GM12878 (cell line): ENCODE measurements at regions of chr14 and their contacts with region 1.

Region 1: DNA sequence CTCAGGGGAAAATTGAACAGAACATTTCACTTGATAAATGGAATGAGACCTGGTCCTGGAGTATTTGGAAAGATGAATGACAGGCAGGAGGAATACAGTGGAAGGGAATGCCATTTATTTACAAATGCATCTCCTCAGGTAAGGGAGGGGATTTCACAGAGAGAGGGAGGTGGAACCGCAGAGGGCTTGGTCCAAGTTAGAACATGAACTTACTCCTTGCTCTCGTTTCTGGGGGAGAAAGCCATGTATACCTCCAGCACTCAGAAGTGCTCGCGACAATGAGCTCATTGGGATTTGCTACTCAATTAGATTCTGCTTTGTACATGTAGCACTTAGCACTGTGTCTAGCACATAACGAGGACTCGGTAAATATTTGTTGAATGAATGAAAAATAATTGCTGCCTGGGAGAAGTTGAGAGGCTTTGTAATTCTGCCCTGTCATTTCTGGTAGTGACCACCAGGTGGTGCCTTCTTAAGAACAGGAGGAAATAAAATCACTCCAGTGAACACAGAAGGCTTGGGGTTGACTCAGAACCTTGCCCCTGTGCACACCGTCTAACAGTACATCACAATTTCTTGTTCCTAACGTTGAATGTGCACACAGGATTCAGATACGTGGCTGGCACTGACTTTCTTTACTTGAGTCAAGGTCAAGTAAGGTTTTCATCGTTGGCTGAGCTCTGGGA is 91.6 kb downstream of the RGS6 start:
- DNase-seq: peak; percentile 43
- ATAC-seq: peak; percentile 90
- H3K4me3 ChIP-seq: no peak overlapping the region
- H3K27ac ChIP-seq: no peak overlapping the region
- H3K4me1 ChIP-seq: peaks cover 15% of the 10 kb centered on the region
- H3K27me3 ChIP-seq: no peaks in the 10 kb centered on the region
- CTCF ChIP-seq: peak; percentile 61 to 76 (median 64)
- EP300 ChIP-seq: no peak
- POLR2A ChIP-seq: no peak
- RAD21 ChIP-seq: peak; percentile 80

Region 2: GRCh38 chr14:71988939-71989338 is 34.9 kb before region 1 on chr14:
- CTCF ChIA-PET with region 1: interaction called, 4 read pairs
- POLR2A ChIA-PET with region 1: interaction called, 4 read pairs
- RAD21 ChIA-PET with region 1: interaction called, 7 read pairs
- SMC1A ChIA-PET with region 1: interaction called, 12 read pairs
- in situ Hi-C with region 1: no loop called
- intact Hi-C with region 1: no loop called
- DNase-seq: no peak
- ATAC-seq: no peak
- H3K4me3 ChIP-seq: no peak overlapping the region
- H3K27ac ChIP-seq: no peak overlapping the region
- H3K4me1 ChIP-seq: no peaks in the 10 kb centered on the region
- H3K27me3 ChIP-seq: no peaks in the 10 kb centered on the region
- CTCF ChIP-seq: no peak
- EP300 ChIP-seq: no peak
- POLR2A ChIP-seq: no peak
- RAD21 ChIP-seq: no peak

Region 3: DNA sequence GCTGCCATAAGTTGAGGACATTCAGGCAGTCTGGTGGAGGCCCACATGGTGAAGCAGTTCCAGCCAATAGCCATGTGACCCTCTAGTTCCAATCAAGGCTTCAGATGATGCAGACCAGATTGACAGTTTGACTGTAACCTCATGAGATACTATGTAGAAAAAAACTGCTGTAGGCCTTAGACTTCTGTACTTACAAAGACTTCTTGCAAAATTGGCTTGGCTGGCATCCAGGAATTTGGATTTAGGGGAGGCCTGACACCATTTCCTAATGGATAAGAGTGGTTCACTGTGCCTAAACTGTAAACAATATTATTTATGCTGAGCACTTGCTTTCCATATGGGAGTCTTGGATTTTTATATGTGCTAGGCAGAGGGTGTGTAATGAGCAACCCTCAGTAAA is 15.2 kb before region 1 on chr14:
- CTCF ChIA-PET with region 1: interaction called, 9 read pairs
- POLR2A ChIA-PET with region 1: interaction called, 7 read pairs
- RAD21 ChIA-PET with region 1: interaction called, 9 read pairs
- SMC1A ChIA-PET with region 1: interaction called, 25 read pairs
- in situ Hi-C with region 1: no loop called
- intact Hi-C with region 1: no loop called
- DNase-seq: no peak
- ATAC-seq: no peak
- H3K4me3 ChIP-seq: no peak overlapping the region
- H3K27ac ChIP-seq: no peak overlapping the region
- H3K4me1 ChIP-seq: no peaks in the 10 kb centered on the region
- H3K27me3 ChIP-seq: no peaks in the 10 kb centered on the region
- CTCF ChIP-seq: no peak
- EP300 ChIP-seq: no peak
- POLR2A ChIP-seq: no peak
- RAD21 ChIP-seq: no peak

Region 4: GRCh38 chr14:72049455-72049854 is 25.6 kb after region 1 on chr14:
- CTCF ChIA-PET with region 1: interaction called, 15 read pairs
- POLR2A ChIA-PET with region 1: interaction called, 3 read pairs
- RAD21 ChIA-PET with region 1: interaction called, 12 read pairs
- SMC1A ChIA-PET with region 1: interaction called, 18 read pairs
- in situ Hi-C with region 1: no loop called
- intact Hi-C with region 1: loop called (anchors 2 kb)
- DNase-seq: peak; percentile 64
- ATAC-seq: peak; percentile 99
- H3K4me3 ChIP-seq: no peak overlapping the region
- H3K27ac ChIP-seq: no peak overlapping the region
- H3K4me1 ChIP-seq: no peaks in the 10 kb centered on the region
- H3K27me3 ChIP-seq: no peaks in the 10 kb centered on the region
- CTCF ChIP-seq: no peak
- EP300 ChIP-seq: peak; percentile 33 to 47; a peak in 1 of 4 replicates
- POLR2A ChIP-seq: no peak
- RAD21 ChIP-seq: no peak; the same call in 1 of the 2 replicates

Region 5: GRCh38 chr14:72060917-72061316 is 37.1 kb after region 1 on chr14:
- CTCF ChIA-PET with region 1: interaction called, 41 read pairs
- POLR2A ChIA-PET with region 1: interaction called, 3 read pairs
- RAD21 ChIA-PET with region 1: interaction called, 4 read pairs
- SMC1A ChIA-PET with region 1: interaction called, 22 read pairs
- in situ Hi-C with region 1: no loop called
- intact Hi-C with region 1: no loop called
- DNase-seq: no peak
- ATAC-seq: no peak
- H3K4me3 ChIP-seq: no peak overlapping the region
- H3K27ac ChIP-seq: no peak overlapping the region
- H3K4me1 ChIP-seq: no peaks in the 10 kb centered on the region
- H3K27me3 ChIP-seq: no peaks in the 10 kb centered on the region
- CTCF ChIP-seq: no peak
- EP300 ChIP-seq: no peak
- POLR2A ChIP-seq: no peak
- RAD21 ChIP-seq: no peak

Region 6: DNA sequence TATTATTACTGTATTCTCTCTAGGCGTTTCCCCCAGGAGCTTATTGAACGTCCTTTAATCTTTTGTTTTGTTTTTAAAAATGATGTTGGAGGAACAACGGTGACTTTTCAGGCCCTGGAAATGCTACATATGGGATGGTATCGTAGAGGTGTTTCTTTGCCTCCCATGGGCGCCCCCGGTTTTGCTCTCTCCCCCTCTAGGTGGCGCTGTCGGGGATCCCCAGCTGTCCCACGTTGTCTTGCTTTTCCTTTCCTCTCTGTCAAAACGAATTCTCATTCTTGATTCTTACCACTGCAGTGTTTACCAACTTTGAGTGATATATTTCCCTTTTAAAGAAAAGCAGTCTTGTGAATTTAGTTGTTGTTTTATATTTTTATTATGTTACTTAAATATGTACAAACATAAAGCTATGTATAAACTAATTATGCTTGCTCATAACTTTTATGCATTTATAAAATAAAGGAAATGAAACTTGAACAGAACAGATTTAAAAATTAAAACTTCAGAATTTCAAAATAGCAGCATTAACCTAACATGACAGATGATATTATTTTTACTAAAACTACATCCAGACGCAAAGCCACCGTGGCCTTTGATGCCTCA is 80.2 kb after region 1 on chr14:
- CTCF ChIA-PET with region 1: interaction called, 46 read pairs
- POLR2A ChIA-PET with region 1: interaction called, 3 read pairs
- RAD21 ChIA-PET with region 1: interaction called, 6 read pairs
- SMC1A ChIA-PET with region 1: interaction called, 15 read pairs
- in situ Hi-C with region 1: no loop called
- intact Hi-C with region 1: loop called (anchors 5 kb)
- DNase-seq: no peak
- ATAC-seq: peak; percentile 75
- H3K4me3 ChIP-seq: no peak overlapping the region
- H3K27ac ChIP-seq: no peak overlapping the region
- H3K4me1 ChIP-seq: no peaks in the 10 kb centered on the region
- H3K27me3 ChIP-seq: no peaks in the 10 kb centered on the region
- CTCF ChIP-seq: peak; percentile 59 to 72 (median 66)
- EP300 ChIP-seq: no peak
- POLR2A ChIP-seq: no peak
- RAD21 ChIP-seq: peak; percentile 64

Region 7: GRCh38 chr14:72420725-72421474 is 397.0 kb after region 1 on chr14:
- CTCF ChIA-PET with region 1: interaction called, 32 read pairs
- POLR2A ChIA-PET with region 1: interaction called, 5 read pairs
- RAD21 ChIA-PET with region 1: interaction called, 11 read pairs
- SMC1A ChIA-PET with region 1: interaction called, 14 read pairs
- in situ Hi-C with region 1: no loop called
- intact Hi-C with region 1: loop called (anchors 2 kb)
- DNase-seq: peak; percentile 49
- ATAC-seq: peak; percentile 83
- H3K4me3 ChIP-seq: no peak overlapping the region
- H3K27ac ChIP-seq: no peak overlapping the region
- H3K4me1 ChIP-seq: no peaks in the 10 kb centered on the region
- H3K27me3 ChIP-seq: no peaks in the 10 kb centered on the region
- CTCF ChIP-seq: peak; percentile 91 to 97 (median 95)
- EP300 ChIP-seq: no peak
- POLR2A ChIP-seq: no peak
- RAD21 ChIP-seq: peak; percentile 99